Activated CD4-positive, alpha-beta memory T cell treated with anti-CD3 and anti-CD28 coated beads, Interleukin-2, amount 10 ng/mL, durations not matched to agents 7 days and 5 days (primary cell): ENCODE measurements at regions of chr20 and their contacts with region 1.

Region 1: GRCh38 chr20:50172347-50173013 is 18.1 kb upstream of the CEBPB start:
- DNase-seq: no peak
- H3K4me3 Mint-ChIP-seq: no peak overlapping the region
- H3K27ac Mint-ChIP-seq: no peak overlapping the region
- H3K4me1 Mint-ChIP-seq: peaks cover 5% of the 10 kb centered on the region
- H3K27me3 Mint-ChIP-seq: peaks cover 9% of the 10 kb centered on the region

Region 2: GRCh38 chr20:50061742-50062516 is 110.6 kb before region 1 on chr20:
- CTCF ChIA-PET with region 1: no interaction called
- POLR2A ChIA-PET with region 1: no interaction called
- DNase-seq: no peak
- H3K4me3 Mint-ChIP-seq: no peak overlapping the region
- H3K27ac Mint-ChIP-seq: no peak overlapping the region
- H3K4me1 Mint-ChIP-seq: peaks cover 1% of the 10 kb centered on the region
- H3K27me3 Mint-ChIP-seq: no peaks in the 10 kb centered on the region

Region 3: GRCh38 chr20:50120897-50121693 is 51.4 kb before region 1 on chr20:
- CTCF ChIA-PET with region 1: interaction called, 157 read pairs
- POLR2A ChIA-PET with region 1: interaction called, 11 read pairs
- DNase-seq: peak; percentile 72
- H3K4me3 Mint-ChIP-seq: no peak overlapping the region
- H3K27ac Mint-ChIP-seq: no peak overlapping the region
- H3K4me1 Mint-ChIP-seq: peaks cover 8% of the 10 kb centered on the region
- H3K27me3 Mint-ChIP-seq: no peaks in the 10 kb centered on the region

Region 4: DNA sequence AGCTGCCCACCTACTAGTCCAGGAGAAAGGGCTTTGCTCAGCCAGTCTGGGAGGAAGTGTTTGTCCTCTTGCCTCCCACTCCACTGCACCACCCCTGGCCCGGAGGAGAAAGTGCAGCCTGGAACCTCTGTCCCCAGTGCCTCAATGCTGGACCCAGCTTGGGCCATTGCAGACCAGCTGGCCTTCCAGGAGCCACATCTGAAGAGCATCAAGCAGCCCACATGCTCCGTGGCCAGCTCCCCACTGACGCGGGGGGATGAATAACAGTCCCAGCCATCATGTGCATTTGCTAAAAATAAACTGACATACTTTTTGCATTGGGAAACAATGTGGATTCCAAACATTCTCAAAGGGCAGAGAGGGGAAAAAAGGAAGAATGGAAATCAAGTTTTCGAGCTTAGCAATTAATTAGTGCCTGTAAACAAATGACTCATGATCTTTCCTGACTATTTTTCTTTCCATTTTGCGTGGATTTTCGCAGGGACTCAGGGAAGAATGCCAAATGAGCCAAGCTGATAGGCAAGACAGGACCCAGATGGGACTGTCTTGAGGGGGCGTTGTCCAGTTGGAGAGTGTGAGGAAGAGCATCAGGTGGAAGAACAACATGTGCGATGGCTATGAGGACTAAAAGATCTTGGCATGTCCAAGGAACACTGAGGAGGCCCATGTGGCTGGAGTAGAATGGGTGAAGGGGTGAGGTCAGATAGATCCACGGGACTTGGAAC is 52.2 kb after region 1 on chr20:
- CTCF ChIA-PET with region 1: no interaction called
- POLR2A ChIA-PET with region 1: no interaction called
- DNase-seq: no peak
- H3K4me3 Mint-ChIP-seq: no peak overlapping the region
- H3K27ac Mint-ChIP-seq: no peak overlapping the region
- H3K4me1 Mint-ChIP-seq: peaks cover 19% of the 10 kb centered on the region
- H3K27me3 Mint-ChIP-seq: no peaks in the 10 kb centered on the region